ENCODE measurements at regions of chr18 and their contacts with region 1.

Region 1: DNA sequence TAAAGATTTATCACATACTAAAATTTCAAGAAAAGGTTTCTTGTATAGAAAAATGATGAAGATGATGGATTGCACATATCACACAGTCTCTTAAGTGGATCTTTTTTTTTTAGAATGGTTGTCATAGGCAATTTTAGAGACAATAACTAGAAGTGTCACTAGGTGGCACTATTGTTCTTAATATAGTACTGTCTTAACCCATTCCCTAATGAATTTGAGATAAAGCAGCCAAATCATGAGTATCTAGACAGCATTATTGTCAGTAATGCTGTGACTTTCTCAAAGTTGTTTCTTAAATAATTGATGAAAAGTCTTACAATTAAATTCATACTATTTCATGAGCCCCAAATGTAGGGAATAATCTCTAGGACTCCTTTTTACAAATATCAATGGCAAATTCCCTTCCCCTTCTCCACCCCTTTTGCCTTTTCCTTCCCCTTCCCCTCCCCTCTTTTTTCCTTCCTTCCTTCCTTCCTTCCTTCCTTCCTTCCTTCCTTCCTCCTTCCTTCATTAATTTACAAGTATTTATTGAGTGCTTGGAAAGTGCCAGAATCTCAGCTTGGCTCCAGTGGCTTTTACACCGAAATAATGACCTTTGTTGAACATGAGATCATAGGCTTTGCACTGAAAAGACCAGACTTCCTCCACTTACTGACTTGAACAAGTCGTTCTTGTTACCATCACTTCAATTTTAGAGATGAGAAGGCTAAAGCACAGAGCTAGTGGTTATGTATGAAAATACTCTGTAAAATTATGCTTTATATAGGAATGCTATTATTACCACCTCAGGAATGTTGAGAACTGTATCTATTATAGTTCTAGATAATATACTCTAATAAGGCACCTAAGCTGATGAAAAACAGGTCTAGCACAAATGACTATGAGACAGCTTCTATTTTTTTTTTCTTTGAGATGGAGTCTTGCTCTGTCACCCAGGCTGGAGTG is 19.8 kb downstream of the MYL12B start:
- DNase-seq: peak; percentile 95
- H3K4me3 ChIP-seq: no peak overlapping the region
- H3K27ac ChIP-seq: peak overlapping the region; percentile 96
- H3K4me1 ChIP-seq: peaks cover 58% of the 10 kb centered on the region
- H3K27me3 ChIP-seq: no peaks in the 10 kb centered on the region
- CTCF ChIP-seq: peak; percentile 68

Region 2: DNA sequence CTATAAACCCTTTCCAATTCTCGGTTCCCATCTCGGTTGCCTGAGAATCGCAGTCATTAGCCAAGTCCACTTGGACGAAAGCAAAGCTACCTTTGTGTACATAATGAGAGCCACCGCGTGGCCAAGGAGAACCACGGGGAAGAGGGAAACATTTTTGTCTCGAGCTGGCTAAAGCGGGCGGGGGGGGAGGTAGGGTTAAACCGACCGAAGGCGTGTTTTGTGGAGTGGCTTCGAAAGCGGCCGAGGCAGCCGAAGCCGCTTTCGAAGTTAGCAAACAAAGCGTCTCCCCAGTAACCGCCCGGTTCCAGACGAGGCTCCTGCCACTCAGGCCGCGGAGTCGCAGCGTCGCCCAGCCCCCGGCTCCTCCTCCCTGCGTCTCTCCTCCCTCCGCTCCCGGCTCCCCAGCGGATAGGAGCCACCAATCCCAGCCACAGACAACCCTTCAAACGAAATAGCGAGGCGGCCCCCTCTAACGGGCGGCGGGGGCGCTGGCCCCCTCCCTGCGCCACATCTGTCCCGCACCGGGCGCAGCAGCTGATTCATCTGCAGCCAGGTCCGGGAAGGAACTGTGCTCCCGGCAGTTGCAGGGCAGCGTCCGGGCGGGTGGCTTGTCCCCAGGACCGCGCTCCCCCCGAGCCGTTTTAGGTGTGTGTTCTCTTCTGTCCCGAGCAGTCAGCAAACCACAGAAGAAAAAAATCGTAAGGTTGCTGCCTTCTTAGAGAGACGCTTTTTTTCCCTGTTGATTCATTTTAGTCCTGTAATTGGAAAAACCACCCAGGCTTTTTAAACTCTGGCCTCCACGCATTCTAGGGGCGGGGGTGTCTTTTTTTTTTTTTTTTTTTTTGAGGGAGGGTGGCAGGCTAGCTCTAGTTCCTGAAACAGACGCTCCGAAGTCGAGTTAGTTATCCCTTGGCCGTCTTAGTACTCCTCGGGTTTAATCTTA is 166.4 kb after region 1 on chr18:
- CTCF ChIA-PET with region 1: interaction called, 4 read pairs
- POLR2A ChIA-PET with region 1: no interaction called
- intact Hi-C with region 1: loop called (anchors 2 kb)
- DNase-seq: peak; percentile 99
- H3K4me3 ChIP-seq: peak overlapping the region; percentile 91
- H3K27ac ChIP-seq: peak overlapping the region; percentile 96
- H3K4me1 ChIP-seq: peaks cover 23% of the 10 kb centered on the region
- H3K27me3 ChIP-seq: no peaks in the 10 kb centered on the region
- CTCF ChIP-seq: 0 out of 2 replicates have a peak, but pooled peaks have one; percentile 15

Region 3: GRCh38 chr18:3593904-3594661 is 312.4 kb after region 1 on chr18:
- CTCF ChIA-PET with region 1: interaction called, 5 read pairs
- POLR2A ChIA-PET with region 1: interaction called, 5 read pairs
- intact Hi-C with region 1: loop called (anchors 2 kb)
- DNase-seq: peak; percentile 94
- H3K4me3 ChIP-seq: peak overlapping the region; percentile 41
- H3K27ac ChIP-seq: peak overlapping the region; percentile 94
- H3K4me1 ChIP-seq: peaks cover 51% of the 10 kb centered on the region
- H3K27me3 ChIP-seq: no peaks in the 10 kb centered on the region
- CTCF ChIP-seq: peak; percentile 75

Region 4: DNA sequence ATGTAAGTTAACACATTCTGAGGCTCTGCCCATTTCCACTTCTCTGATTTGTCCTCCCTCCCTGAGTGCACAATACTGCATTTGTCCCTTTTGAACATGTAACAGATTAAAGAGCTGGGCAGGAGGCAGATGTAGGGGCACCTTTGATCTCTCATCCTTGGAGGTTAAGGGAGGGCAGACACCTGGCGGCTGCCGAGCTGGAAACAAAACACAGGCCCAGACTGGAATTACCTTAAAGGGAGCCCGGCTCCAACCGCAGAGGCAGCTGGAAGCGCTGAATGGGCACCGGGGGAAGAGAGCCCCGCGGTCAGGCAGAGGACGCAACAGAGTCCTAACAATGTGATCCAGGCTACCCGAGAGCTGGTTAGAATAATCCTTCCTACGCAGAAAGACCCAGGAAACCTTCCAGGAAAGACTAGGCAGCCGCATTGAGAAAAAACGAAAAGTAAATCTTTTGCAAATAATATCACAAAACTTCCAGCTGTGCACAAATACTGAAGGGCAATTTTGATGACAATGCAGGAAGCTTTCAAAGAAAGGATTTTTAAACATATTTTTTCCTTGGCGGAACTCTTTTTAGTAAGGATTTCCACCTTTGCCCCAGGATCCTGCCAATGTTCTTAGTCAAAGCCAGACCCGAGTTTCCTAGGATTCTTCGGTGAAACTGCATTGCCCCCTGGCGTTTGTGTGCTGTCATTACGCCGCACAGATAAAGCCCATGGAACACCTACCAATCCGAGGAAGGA is 384.2 kb after region 1 on chr18:
- CTCF ChIA-PET with region 1: interaction called, 4 read pairs
- POLR2A ChIA-PET with region 1: interaction called, 9 read pairs
- intact Hi-C with region 1: loop called (anchors 1 kb)
- DNase-seq: peak; percentile 94
- H3K4me3 ChIP-seq: peak overlapping the region; percentile 21
- H3K27ac ChIP-seq: peak overlapping the region; percentile 88
- H3K4me1 ChIP-seq: peaks cover 54% of the 10 kb centered on the region
- H3K27me3 ChIP-seq: no peaks in the 10 kb centered on the region
- CTCF ChIP-seq: peak; percentile 96

Region 5: GRCh38 chr18:3832025-3832638 is 550.4 kb after region 1 on chr18:
- CTCF ChIA-PET with region 1: no interaction called
- POLR2A ChIA-PET with region 1: interaction called, 22 read pairs
- intact Hi-C with region 1: loop called (anchors 1 kb)
- DNase-seq: peak; percentile 78
- H3K4me3 ChIP-seq: no peak overlapping the region
- H3K27ac ChIP-seq: peak overlapping the region; percentile 98
- H3K4me1 ChIP-seq: peaks cover 84% of the 10 kb centered on the region
- H3K27me3 ChIP-seq: no peaks in the 10 kb centered on the region
- CTCF ChIP-seq: no peak

Region 6: GRCh38 chr18:3995476-3996102 is 713.9 kb after region 1 on chr18:
- CTCF ChIA-PET with region 1: no interaction called
- POLR2A ChIA-PET with region 1: no interaction called
- intact Hi-C with region 1: loop called (anchors 5 kb)
- DNase-seq: peak; percentile 93
- H3K4me3 ChIP-seq: peak overlapping the region; percentile 13
- H3K27ac ChIP-seq: peak overlapping the region; percentile 83
- H3K4me1 ChIP-seq: peaks cover 48% of the 10 kb centered on the region
- H3K27me3 ChIP-seq: no peaks in the 10 kb centered on the region
- CTCF ChIP-seq: peak; percentile 92

Region 7: DNA sequence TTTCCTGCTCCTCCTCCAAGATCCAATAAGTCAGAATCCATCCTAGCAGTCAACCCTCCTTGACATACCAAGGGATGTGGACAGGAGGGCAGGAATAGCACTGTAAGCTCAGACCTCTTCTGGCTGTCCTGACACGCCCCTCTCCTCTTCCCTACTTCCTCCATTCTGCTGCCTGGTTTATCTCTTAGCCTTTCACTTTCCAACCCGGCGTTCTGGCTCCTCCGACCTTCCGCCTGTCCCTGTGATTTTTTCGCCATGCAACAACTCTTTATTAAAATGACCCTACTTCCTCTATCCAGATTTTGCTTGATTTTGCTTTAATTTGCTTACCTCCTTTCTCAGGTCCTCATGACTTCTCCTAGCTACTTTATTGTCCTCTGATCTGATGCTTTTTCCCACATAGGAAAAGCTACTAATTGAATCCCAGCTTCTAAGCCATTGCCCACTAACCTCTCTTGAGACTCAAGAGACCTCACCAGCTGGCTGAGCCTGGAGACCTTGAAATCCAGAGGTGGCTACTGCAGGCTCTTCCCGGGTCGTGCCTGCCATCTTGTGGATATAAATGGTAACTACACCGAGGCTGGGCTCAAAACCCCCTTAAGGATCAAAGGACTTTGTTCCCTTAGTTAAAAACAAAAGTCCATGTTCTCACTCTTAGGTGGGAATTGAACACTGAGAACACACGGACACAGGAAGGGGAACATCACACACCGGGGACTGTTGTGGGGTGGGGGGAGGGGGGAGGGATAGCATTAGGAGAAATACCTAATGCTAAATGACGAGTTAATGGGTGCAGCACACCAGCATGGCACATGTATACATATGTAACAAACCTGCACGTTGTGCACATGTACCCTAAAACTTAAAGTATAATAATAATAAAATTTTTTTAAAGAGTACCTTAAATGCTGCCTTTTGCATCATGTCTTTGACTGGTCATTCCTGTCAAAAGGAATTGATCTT is 1775.9 kb after region 1 on chr18:
- CTCF ChIA-PET with region 1: no interaction called
- POLR2A ChIA-PET with region 1: no interaction called
- intact Hi-C with region 1: loop called (anchors 2 kb)
- DNase-seq: peak; percentile 85
- H3K4me3 ChIP-seq: no peak overlapping the region
- H3K27ac ChIP-seq: no peak overlapping the region
- H3K4me1 ChIP-seq: peaks cover 20% of the 10 kb centered on the region
- H3K27me3 ChIP-seq: no peaks in the 10 kb centered on the region
- CTCF ChIP-seq: peak; percentile 83

Measured in A673 (cell line).